ENCODE measurements at regions of chr5 and their contacts with region 1.

Region 1: DNA sequence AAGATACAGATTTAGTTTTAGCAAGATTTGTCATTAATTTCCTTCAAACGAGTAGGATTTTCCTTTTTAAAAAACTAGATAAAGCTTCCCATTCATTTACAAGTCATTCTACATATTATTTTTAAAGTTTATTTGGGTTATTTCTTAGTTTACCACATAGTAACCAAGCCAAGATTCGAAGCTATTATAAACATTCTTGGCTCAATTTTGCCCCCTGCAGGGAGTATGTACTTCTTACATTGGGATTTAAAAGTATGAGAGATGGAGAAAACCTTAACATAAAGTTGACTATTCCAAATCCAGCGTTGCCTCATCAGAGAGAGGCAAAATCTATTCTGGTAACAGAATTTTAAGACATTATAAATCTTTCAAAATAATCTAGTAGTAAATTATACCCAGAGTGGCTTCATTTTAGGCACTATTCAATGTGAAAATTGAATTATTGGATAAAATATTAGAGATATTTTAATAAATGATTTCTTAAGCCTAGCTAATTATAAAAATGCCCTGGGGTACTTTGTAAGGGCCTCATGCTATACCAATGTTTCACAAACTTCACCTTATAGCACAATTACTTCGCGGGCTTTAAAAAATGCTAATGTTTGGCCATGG is 39.1 kb downstream of the FBN2 start:
- DNase-seq: peak; percentile 20
- H3K4me3 ChIP-seq: no peak overlapping the region
- H3K27ac ChIP-seq: no peak overlapping the region
- H3K4me1 ChIP-seq: no peaks in the 10 kb centered on the region
- H3K27me3 ChIP-seq: no peaks in the 10 kb centered on the region
- CTCF ChIP-seq: peak; percentile 50 to 61

Region 2: GRCh38 chr5:127564002-127564769 is 934.8 kb before region 1 on chr5:
- CTCF ChIA-PET with region 1: no interaction called
- dilution Hi-C with region 1: no loop called
- in situ Hi-C with region 1: no loop called
- intact Hi-C with region 1: loop called (anchors 10 kb)
- DNase-seq: peak; percentile 44
- H3K4me3 ChIP-seq: no peak overlapping the region
- H3K27ac ChIP-seq: no peak overlapping the region
- H3K4me1 ChIP-seq: no peaks in the 10 kb centered on the region
- H3K27me3 ChIP-seq: no peaks in the 10 kb centered on the region
- CTCF ChIP-seq: peak; percentile 62 to 73

Region 3: DNA sequence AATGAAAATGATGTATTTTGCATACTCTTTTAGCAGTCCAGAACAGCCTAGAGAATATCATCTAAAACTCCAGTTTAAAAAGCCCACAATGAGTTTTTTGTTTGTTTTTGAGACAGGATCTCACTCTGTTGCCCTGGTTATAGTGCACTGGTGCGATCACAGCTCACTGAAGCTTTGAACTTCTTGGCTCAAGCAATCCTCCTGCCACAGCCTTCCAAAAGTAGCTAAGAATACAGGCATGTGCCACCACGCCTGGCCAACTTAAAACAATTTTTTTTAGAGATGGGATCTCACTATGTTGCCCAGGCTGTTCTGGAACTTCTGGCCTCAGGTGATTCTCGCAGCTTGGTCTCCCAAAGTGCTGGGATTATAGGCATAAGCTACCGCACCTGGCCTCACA is 136.6 kb before region 1 on chr5:
- CTCF ChIA-PET with region 1: no interaction called
- dilution Hi-C with region 1: no loop called
- in situ Hi-C with region 1: no loop called
- intact Hi-C with region 1: loop called (anchors 10 kb)
- DNase-seq: no peak
- H3K4me3 ChIP-seq: no peak overlapping the region
- H3K27ac ChIP-seq: no peak overlapping the region
- H3K4me1 ChIP-seq: no peaks in the 10 kb centered on the region
- H3K27me3 ChIP-seq: no peaks in the 10 kb centered on the region
- CTCF ChIP-seq: no peak

Region 4: DNA sequence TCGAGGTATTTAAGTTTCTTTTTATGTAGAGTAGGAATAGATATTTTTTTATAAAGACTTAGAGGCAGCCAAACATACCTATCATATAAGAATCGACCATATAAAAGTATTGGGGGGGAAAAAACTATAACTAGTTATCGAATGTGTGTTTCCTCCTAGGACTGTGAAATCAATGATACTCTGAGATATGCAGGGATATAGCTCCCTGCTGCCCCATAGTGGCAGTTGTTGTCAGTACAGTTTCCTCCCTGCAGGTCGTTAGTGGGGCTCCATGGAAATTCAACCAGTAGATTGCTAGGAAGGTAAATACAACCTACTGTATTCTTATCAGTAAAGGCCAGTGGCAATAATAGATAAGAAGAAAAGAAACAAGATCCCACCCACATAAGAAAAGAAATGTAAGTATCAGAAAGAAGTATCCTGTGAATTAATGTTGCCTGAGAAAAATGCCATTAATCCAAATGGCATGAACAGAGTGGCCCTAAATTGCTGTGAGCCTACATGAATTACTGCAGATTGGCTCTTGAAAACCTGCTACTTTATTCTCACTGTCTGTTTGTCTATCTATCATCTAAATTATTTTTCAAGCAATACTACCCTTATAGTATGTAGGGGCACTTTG is 176.0 kb after region 1 on chr5:
- CTCF ChIA-PET with region 1: no interaction called
- dilution Hi-C with region 1: no loop called
- in situ Hi-C with region 1: no loop called
- intact Hi-C with region 1: loop called (anchors 2 kb)
- DNase-seq: peak; percentile 43
- H3K4me3 ChIP-seq: no peak overlapping the region
- H3K27ac ChIP-seq: no peak overlapping the region
- H3K4me1 ChIP-seq: no peaks in the 10 kb centered on the region
- H3K27me3 ChIP-seq: no peaks in the 10 kb centered on the region
- CTCF ChIP-seq: peak; percentile 87

Region 5: GRCh38 chr5:128870373-128870772 is 371.4 kb after region 1 on chr5:
- CTCF ChIA-PET with region 1: no interaction called
- dilution Hi-C with region 1: no loop called
- in situ Hi-C with region 1: no loop called
- intact Hi-C with region 1: no loop called
- DNase-seq: no peak
- H3K4me3 ChIP-seq: no peak overlapping the region
- H3K27ac ChIP-seq: no peak overlapping the region
- H3K4me1 ChIP-seq: no peaks in the 10 kb centered on the region
- H3K27me3 ChIP-seq: no peaks in the 10 kb centered on the region
- CTCF ChIP-seq: no peak

Measured in mammary epithelial cell (primary cell).